Common myeloid progenitor, CD34-positive (primary cell): ENCODE measurements at regions of chr16 and their contacts with region 1.

Region 1: GRCh38 chr16:74296432-74297144 is at the start of gene PSMD7:
- DNase-seq: peak; percentile 91 to 97 (median 95)
- H3K4me3 ChIP-seq: peak within 1 kb of the TSS; percentile 72 to 93 (median 89)
- H3K27ac ChIP-seq: peak within 1 kb of the TSS; percentile 87 to 96
- H3K4me1 ChIP-seq: peaks cover 7 to 29% (median 21%) of the 10 kb centered on the region in 4 experiments
- H3K27me3 ChIP-seq: no peaks in the 10 kb centered on the region

Region 2: GRCh38 chr16:74275002-74275636 is 21.5 kb before region 1 on chr16:
- CTCF ChIA-PET with region 1: interaction called, 23 read pairs
- POLR2A ChIA-PET with region 1: no interaction called
- DNase-seq: peak; percentile 34 to 52 (median 51)
- H3K4me3 ChIP-seq: no peak overlapping the region
- H3K27ac ChIP-seq: no peak overlapping the region
- H3K4me1 ChIP-seq: peaks cover 0 to under 1% (median 0%) of the 10 kb centered on the region in 4 experiments
- H3K27me3 ChIP-seq: peaks cover 0 to 1% (median 0%) of the 10 kb centered on the region in 5 experiments

Region 3: DNA sequence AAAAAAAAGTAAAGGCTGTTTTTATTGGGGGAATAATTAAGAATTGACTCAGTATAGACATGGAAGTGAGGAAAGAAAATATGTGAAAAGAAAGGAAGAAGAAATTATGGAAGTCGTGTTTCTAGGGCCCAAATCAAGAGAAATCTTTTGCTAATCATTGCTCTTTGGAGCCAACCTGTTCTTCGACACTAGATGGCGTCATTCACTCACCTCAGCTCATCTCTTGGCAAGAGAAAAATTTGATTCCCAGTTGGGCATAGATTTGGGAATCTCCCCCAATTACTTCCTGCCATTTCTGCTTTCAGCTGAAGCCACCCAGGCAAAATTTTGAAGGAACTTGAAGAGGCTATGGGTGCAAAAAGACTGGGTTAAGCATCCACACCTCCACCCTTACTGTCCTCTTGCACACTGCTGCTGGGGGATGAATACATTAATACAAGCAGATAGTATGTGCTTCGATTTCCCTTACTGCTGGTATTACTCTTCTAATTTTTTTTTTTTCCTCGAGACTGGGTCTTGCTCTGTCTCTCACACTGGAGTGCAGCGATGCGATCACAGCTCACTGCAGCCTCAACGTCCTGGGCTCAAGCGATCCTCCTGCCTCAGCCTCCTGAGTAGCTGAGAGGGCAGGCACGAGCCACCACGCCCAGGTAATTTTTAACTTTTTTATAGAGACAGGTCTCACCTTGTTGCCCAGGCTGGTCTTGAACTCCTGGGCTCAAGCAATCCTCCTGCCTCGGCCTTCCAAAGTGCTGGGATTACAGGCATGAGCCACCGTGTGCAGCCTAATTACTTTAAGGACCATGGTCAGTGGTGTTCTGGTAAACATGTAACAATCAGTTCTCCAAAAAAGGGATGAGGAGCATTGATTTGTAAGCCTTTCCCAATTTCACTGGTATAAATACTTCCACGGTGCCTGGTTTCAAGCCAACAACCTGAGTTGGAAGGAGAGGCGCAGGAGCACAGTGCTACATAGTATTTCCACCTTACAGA is 13.5 kb after region 1 on chr16:
- CTCF ChIA-PET with region 1: interaction called, 10 read pairs
- POLR2A ChIA-PET with region 1: no interaction called
- DNase-seq: peak; percentile 42 to 60 (median 53)
- H3K4me3 ChIP-seq: no peak overlapping the region
- H3K27ac ChIP-seq: no peak overlapping the region
- H3K4me1 ChIP-seq: peaks cover 0 to 16% (median 3%) of the 10 kb centered on the region in 4 experiments
- H3K27me3 ChIP-seq: no peaks in the 10 kb centered on the region